Sciatic nerve (tissue), 2 donors: ENCODE measurements at regions of chr2 and their contacts with region 1.

Region 1: GRCh38 chr2:39099870-39100728 is 20.8 kb downstream of the SOS1 start:
- DNase-seq: no peak
- ATAC-seq: no peak

Region 2: DNA sequence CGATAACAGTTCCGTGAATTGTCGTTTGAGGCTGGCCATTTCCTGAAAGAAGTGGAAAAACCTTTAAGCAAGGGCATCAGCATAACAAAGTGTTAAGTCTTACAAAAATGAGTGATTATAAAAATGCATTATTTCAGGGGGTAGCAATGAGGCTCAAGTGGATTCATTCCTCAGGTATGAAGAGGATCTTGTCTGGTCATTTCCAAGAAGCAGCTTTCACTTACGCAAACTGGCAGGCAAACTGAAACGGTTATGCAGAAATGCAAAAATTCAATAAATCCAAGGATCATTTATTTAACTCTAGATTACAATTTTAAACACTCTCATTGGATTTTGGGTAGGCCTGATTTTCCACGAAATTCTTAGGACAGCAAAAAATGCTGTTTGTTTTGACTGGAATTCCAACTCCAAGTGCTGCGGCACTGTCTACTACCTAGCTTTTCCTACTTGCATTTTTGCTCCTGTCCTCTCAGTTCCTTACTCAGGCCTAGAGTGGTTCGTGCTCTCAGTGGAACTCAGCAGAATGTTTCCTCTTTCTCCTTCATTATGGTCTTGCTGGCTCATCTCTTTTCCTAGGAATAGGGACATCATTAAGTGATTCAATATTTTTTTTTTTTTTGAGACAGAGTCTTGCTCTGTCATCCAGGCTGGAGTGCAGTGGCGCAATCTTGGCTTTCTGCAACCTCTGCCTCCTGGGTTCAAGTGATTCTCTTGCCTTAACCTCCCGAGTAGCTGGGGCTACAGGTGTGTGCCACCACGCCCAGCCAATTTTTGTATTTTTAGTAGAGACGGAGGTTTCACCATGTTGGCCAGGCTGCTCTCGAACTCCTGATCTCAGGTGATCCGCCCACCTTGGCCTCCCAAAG is 284.3 kb before region 1 on chr2:
- intact Hi-C with region 1: loop called (anchors 5 kb)
- DNase-seq: no peak
- ATAC-seq: no peak